Activated T-helper 2 cell treated with anti-CD3 and anti-CD28 coated beads, Interferon-gamma antibody, Interleukin-2, Interleukin-4, amounts not matched to agents 10 μg/mL and 5 μg/mL and 100 μg/mL, durations not matched to agents 14 hours and 24 hours and 36 hours (primary cell): ENCODE measurements at regions of chr19 and their contacts with region 1.

Region 1: DNA sequence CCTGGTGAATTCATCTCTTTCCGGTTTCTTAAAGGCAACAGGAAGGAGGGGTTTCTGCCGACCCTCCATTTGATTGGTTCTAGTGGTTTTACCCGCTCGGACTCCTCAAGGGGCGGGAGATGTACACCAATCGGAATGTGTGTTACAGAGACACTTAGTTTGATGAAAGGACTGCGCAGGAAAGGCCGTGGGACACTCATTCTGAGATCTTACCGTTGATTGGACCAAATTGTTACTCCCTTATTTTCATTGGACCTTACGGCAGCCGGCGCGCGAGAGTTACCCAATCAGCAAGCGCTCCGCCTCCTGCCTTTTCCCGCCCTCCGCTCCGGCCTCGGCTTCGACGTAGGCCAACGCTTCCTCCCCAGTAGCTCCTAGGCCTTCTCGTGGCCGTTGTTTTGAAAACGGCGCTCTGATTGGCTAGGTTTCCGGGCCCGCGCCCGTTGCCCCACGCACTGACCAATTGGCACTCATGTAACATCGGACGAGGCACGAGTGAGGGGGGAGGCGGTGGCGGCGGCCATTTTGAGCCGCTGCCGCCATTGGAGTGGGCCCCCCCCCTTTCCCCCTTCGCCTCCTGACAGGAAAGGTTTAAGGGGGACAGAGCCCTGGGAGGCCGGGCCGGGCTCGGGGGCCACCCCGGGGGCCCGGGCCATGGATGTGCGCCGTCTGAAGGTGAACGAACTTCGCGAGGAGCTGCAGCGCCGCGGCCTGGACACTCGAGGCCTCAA is at the start of gene HNRNPUL1:
- DNase-seq: peak; percentile 99
- H3K4me3 Mint-ChIP-seq: peak within 1 kb of the TSS; percentile 99
- H3K27ac Mint-ChIP-seq: peak within 1 kb of the TSS; percentile 100
- H3K4me1 Mint-ChIP-seq: peaks cover 32% of the 10 kb centered on the region
- H3K27me3 Mint-ChIP-seq: peaks cover 2% of the 10 kb centered on the region
- total RNA-seq, gene HNRNPUL1: 283 and 294 TPM in 2 replicates

Region 2: DNA sequence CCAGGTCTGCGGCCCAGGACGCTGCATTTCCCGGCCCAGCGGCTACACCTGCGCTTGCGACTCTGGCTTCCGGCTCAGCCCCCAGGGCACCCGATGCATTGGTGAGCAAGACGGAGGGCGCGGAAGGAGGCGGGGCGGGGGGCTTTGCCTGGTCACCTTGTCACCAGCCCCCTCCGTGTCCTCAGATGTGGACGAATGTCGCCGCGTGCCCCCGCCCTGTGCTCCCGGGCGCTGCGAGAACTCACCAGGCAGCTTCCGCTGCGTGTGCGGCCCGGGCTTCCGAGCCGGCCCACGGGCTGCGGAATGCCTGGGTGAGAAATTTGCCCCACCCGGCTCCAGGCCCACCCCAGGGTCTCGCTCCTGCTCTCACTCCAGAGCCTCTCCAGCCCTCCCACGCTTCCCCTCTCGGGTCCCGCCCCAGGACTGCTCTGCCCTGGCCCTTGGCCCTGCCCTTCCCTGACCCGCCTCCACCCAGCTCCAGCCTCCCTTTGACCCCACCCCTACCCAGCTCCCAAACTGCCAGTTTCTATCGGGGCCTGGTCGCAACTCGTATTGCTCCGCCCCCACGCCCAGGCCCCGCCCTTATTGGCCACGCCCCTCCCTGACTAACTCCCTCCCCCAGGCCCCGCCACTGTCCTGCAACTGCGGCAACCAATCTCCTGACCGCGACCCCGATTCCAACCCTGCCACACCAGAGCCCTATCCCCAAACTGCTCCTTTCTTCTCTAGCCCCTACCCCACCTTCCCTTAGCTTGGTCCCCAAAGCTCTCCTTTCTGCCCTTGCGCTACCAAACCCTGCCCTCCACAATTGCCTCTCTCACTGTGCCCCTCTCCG is 654.2 kb before region 1 on chr19:
- intact Hi-C with region 1: loop called (anchors 10 kb)
- DNase-seq: peak; percentile 87
- H3K4me3 Mint-ChIP-seq: peak overlapping the region; percentile 80
- H3K27ac Mint-ChIP-seq: peak overlapping the region; percentile 93
- H3K4me1 Mint-ChIP-seq: peaks cover 35% of the 10 kb centered on the region
- H3K27me3 Mint-ChIP-seq: no peaks in the 10 kb centered on the region

Region 3: GRCh38 chr19:41206926-41207750 is 56.9 kb before region 1 on chr19:
- intact Hi-C with region 1: loop called (anchors 1 kb)
- DNase-seq: no peak
- H3K4me3 Mint-ChIP-seq: no peak overlapping the region
- H3K27ac Mint-ChIP-seq: no peak overlapping the region
- H3K4me1 Mint-ChIP-seq: peaks cover 17% of the 10 kb centered on the region
- H3K27me3 Mint-ChIP-seq: peaks cover 2% of the 10 kb centered on the region

Region 4: GRCh38 chr19:41302624-41303351 is 38.8 kb after region 1 on chr19:
- intact Hi-C with region 1: loop called (anchors 1 kb)
- DNase-seq: peak; percentile 49
- H3K4me3 Mint-ChIP-seq: peak overlapping the region; percentile 78
- H3K27ac Mint-ChIP-seq: peak overlapping the region; percentile 98
- H3K4me1 Mint-ChIP-seq: peaks cover 86% of the 10 kb centered on the region
- H3K27me3 Mint-ChIP-seq: no peaks in the 10 kb centered on the region

Region 5: GRCh38 chr19:41327576-41328156 is 63.7 kb after region 1 on chr19:
- intact Hi-C with region 1: no loop called
- DNase-seq: peak; percentile 68
- H3K4me3 Mint-ChIP-seq: peak overlapping the region; percentile 73
- H3K27ac Mint-ChIP-seq: peak overlapping the region; percentile 92
- H3K4me1 Mint-ChIP-seq: peaks cover 50% of the 10 kb centered on the region
- H3K27me3 Mint-ChIP-seq: no peaks in the 10 kb centered on the region

Region 6: DNA sequence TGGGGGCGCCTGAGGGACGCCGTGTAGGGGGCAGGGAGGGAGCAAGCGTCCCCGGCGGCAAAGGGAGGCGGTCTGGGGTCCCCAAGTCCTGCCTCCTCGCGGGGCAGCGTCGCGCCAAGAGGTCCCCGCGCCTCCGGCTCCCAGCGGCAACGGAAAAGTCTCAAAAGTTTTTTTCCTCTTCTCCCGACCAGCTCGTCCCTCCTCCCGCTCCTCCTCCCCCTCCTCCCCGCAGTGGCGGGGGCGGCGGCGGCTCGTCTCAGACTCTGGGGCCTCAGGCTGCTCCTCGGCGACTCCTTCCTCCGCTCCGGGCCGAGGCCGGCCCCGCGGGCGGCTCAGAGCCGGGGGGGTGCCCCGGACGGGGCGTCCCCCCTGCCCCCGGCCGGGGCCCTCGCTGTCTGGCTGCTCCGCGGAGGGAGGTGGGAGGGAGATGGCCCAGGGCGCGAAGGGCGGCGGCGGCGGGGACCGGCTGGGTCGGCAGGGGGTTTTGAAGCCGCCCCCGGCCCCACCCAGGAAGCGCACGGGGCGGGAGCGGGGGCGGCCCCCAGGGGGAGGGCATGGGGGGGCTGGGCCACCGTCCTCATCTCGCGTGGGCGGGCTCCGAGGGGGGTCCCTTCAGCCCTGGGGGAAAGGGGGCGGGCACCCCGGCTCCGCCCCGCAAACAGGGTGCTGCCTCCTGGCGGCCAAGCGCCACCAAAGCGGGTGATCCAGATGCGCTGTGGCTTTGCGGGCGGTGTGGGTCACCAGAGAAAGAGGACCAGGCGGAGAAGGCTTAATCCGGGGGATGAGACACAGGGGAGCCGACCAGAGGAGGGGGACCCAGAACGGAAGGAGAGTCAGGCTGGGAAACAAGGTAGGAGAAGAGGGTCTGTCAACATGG is 89.7 kb after region 1 on chr19 and contains the start of gene TGFB1:
- intact Hi-C with region 1: loop called (anchors 1 kb)
- DNase-seq: peak; percentile 90
- H3K4me3 Mint-ChIP-seq: peak within 1 kb of the TSS; percentile 100
- H3K27ac Mint-ChIP-seq: peak within 1 kb of the TSS; percentile 91
- H3K4me1 Mint-ChIP-seq: peaks cover 52% of the 10 kb centered on the region
- H3K27me3 Mint-ChIP-seq: no peaks in the 10 kb centered on the region
- total RNA-seq, gene TGFB1: 125 and 126 TPM in 2 replicates

Region 7: DNA sequence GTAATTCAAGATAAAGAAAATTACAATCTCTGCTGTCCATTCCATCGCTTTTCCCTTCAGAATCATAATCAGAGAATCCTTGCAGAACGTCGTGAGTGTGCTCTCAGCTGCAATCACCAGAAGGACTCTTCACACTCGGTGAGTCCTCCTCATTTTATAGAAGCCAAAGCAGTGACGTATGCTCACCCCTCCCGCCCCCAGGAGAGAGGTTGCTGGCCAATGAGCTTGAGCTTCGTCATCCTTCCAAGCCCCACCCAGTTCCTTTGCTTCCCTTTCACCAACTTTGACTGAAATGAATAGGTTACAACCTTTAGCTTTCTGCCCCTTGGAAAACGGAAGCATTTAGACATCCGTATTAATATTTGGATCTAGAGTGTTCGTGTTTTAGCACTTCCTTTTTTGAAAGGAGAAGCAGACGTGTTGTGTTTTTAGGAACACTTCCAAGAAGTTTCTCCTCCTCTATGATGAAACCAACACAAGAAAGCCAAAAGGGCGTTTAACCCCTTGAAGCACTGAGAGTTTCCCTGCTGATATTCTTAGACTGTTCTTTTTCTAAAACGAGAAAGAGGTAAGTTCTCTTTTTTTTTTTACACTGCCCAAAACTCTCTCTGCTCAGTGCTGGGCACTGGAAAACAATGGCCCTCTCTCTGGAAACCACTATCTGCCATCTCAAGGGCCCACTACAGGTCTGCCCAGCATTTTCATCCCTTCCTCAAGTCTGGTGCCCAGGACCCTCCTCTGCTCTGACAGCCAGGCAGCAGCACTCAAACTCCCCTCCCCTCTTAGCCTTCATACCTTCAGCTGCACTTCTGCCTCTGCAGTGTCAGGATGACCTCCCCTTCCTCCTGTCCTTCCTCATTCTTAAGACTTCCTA is 267.7 kb after region 1 on chr19:
- intact Hi-C with region 1: loop called (anchors 5 kb)
- DNase-seq: peak; percentile 84
- H3K4me3 Mint-ChIP-seq: peak overlapping the region; percentile 86
- H3K27ac Mint-ChIP-seq: peak overlapping the region; percentile 79
- H3K4me1 Mint-ChIP-seq: peaks cover 64% of the 10 kb centered on the region
- H3K27me3 Mint-ChIP-seq: peaks cover 6% of the 10 kb centered on the region

Region 8: DNA sequence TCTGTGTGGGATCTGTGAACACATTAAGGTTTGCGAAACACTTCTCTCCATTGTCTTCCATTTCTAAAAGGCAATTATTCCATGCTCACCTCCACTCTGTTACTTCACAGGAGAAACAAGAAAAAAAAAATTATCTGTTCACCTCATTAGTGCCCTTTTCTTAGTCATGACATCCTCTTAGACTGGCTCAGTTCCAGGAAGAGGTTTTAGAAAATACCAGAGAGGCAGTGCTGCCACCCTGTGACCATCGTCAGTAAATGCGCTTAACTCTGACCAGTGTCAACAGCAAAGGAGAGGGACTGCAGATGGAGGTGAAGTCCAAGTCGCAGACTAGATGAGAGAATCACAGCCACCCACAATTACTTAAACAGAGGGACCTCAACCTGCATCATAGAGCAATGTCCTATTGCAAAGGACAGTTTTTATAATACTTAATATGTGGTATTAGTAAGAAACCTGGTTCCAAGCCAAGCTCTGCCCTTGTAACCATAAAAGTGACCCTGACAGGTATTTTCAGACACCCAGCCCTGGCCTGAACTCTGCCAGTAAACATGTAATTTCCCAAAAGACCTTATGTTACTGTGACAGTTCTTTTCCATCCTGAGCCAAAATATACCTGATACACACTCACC is 331.4 kb after region 1 on chr19:
- intact Hi-C with region 1: no loop called
- DNase-seq: peak; percentile 66
- H3K4me3 Mint-ChIP-seq: no peak overlapping the region
- H3K27ac Mint-ChIP-seq: peak overlapping the region; percentile 33
- H3K4me1 Mint-ChIP-seq: peaks cover 12% of the 10 kb centered on the region
- H3K27me3 Mint-ChIP-seq: peaks cover 25% of the 10 kb centered on the region

Region 9: DNA sequence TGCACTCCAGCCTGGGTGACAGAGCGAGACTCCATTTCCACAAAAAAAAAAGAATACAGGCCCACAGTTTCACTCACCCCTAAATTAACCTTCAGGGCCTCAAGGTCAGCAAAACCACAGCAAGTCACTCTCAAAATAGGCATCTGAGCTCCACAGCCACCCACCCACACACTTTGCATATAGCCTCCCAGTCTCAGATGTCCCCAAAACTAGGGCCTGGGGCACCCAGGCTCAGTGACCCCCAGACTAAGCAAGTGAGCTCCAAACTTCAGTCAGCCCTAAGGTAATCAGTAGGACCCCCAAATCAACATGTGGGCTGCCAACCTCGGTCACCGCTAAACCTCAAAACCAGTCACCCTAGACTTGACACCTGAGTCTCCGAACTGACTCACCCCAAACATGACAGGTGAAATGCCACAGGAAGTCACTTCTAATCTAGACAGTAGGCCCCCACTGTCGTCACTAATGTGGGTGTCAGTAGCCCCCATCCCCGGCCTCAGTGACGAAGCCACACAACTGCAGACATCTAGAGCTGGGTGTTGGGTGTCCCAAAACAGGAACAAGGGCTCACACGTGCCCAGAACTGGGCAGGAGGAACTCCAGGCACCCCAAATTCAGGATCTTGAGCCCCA is 681.2 kb after region 1 on chr19:
- intact Hi-C with region 1: loop called (anchors 5 kb)
- DNase-seq: peak; percentile 67
- H3K4me3 Mint-ChIP-seq: peak overlapping the region; percentile 13
- H3K27ac Mint-ChIP-seq: peak overlapping the region; percentile 97
- H3K4me1 Mint-ChIP-seq: peaks cover 44% of the 10 kb centered on the region
- H3K27me3 Mint-ChIP-seq: peaks cover 6% of the 10 kb centered on the region